Sigmoid colon (tissue), 7 donors: ENCODE measurements at regions of chr6 and their contacts with region 1.

Region 1: GRCh38 chr6:30678964-30679726 is 6.3 kb upstream of the DHX16 start:
- DNase-seq: peak; percentile 94
- H3K4me3 ChIP-seq: peak overlapping the region in 2 of 4 donors; percentile 63 to 79
- H3K27ac ChIP-seq: peak overlapping the region; percentile 94 to 99 (median 98)
- H3K4me1 ChIP-seq: peaks cover 0 to 58% (median 53%) of the 10 kb centered on the region in 4 donors
- H3K27me3 ChIP-seq: no peaks in the 10 kb centered on the region
- CTCF ChIP-seq: peak; percentile 92 to 98 (median 97)
- EP300 ChIP-seq: no peak
- POLR2A ChIP-seq: no peak

Region 2: GRCh38 chr6:30590509-30590908 is 88.6 kb before region 1 on chr6:
- intact Hi-C with region 1: no loop called
- DNase-seq: no peak
- H3K4me3 ChIP-seq: no peak overlapping the region
- H3K27ac ChIP-seq: peak overlapping the region in 3 of 4 donors; percentile 18 to 55 (median 23)
- H3K4me1 ChIP-seq: no peaks in the 10 kb centered on the region
- H3K27me3 ChIP-seq: no peaks in the 10 kb centered on the region
- CTCF ChIP-seq: no peak
- EP300 ChIP-seq: no peak
- POLR2A ChIP-seq: no peak

Region 3: GRCh38 chr6:30626484-30627366 is 52.4 kb before region 1 on chr6 and contains the start of gene ATAT1:
- intact Hi-C with region 1: no loop called
- DNase-seq: peak; percentile 96
- H3K4me3 ChIP-seq: peak within 1 kb of the TSS; percentile 18 to 64 (median 55)
- H3K27ac ChIP-seq: peak within 1 kb of the TSS; percentile 89 to 90 (median 90)
- H3K4me1 ChIP-seq: peaks cover 0 to 16% (median 15%) of the 10 kb centered on the region in 4 donors
- H3K27me3 ChIP-seq: no peaks in the 10 kb centered on the region
- CTCF ChIP-seq: peak in 2 of 4 experiments; percentile 15 to 41
- EP300 ChIP-seq: peak in 1 of 4 donors; percentile 48
- POLR2A ChIP-seq: peak; percentile 23 to 40
- total RNA-seq, gene ATAT1: 2.6 to 7.2 (median 4.8) TPM

Region 4: DNA sequence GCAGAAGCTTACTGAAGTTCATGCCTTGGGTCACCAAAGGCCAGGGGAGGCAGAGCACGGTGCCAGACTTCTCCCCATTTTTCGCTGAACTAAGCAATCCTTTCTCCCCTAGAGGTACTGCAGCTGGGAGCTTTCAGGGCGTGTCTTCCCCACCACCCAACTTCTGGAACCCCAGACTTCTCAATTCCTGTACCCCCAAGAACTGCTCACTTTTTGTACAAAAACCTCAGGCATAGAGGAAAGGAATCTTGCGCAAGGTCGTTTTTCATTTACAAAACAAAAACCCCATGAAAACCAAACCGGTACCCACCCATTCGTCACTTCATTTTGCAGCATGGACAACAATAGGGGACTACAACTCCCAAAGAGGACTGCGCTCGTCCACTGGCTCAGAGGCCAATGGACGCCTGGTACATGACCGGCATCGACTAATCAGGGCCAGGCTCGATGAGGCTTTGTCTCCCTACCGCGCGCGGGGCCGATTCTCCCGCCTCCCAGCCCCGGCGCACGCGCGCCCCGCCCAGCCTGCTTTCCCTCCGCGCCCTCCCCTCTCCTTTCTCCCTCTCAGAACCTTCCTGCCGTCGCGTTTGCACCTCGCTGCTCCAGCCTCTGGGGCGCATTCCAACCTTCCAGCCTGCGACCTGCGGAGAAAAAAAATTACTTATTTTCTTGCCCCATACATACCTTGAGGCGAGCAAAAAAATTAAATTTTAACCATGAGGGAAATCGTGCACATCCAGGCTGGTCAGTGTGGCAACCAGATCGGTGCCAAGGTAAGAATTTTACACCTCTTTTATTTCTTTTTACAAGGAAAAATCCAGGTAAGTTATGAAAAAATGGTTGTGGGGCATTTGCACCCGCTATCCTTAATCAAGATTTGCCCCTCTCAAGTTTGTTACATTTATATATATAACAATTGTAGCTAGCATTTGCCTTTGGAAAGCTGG is 40.9 kb after region 1 on chr6 and contains the start of gene TUBB:
- intact Hi-C with region 1: loop called (anchors 1 kb)
- DNase-seq: peak; percentile 99
- H3K4me3 ChIP-seq: peak within 1 kb of the TSS; percentile 70 to 80 (median 78)
- H3K27ac ChIP-seq: peak within 1 kb of the TSS; percentile 95 to 98 (median 96)
- H3K4me1 ChIP-seq: peaks cover 0 to 61% (median 46%) of the 10 kb centered on the region in 4 donors
- H3K27me3 ChIP-seq: no peaks in the 10 kb centered on the region
- CTCF ChIP-seq: peak in 2 of 4 experiments; percentile 35 to 39
- EP300 ChIP-seq: peak in 1 of 4 donors; percentile 17
- POLR2A ChIP-seq: peak; percentile 95 to 97
- total RNA-seq, gene TUBB: 245 to 287 (median 267) TPM

Region 5: DNA sequence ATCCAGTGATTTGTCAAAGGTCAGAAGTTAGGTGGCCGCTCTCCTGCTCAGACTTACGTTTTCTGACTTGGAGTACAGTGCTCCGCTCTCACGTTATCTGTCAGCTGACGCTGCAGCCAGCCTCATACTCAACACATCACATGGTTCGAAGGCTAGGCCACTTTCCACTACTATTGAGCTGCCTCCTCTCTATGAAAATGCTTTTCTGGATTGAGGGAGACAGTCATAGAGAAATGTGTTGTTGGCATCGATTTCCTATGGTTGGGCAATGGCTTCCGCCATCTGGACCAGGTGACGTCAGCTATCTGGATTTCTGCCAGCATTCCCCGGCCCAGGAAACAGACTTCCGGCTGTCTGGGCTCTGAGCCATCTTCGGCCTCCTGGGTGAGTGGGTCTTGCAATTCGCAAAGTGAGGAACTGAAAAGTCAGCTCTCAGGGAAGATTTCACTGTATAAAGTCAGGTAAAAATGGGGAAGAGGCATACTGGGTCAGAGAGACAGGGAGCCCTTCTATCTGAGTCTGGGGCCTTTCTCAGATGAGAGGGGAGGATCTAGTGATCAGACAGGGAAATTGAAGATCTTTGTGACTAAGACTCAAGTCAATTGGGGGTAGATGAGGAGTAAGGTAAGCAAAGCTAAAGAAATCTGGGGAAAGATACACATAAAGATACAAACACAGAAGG is 102.7 kb after region 1 on chr6:
- intact Hi-C with region 1: loop called (anchors 2 kb)
- DNase-seq: peak; percentile 99
- H3K4me3 ChIP-seq: no peak overlapping the region
- H3K27ac ChIP-seq: peak overlapping the region; percentile 85 to 90 (median 88)
- H3K4me1 ChIP-seq: peaks cover 2 to 54% (median 47%) of the 10 kb centered on the region in 4 donors
- H3K27me3 ChIP-seq: no peaks in the 10 kb centered on the region
- CTCF ChIP-seq: no peak
- EP300 ChIP-seq: peak; percentile 76 to 96 (median 86)
- POLR2A ChIP-seq: peak in 1 of 2 donors; percentile 19

Region 6: GRCh38 chr6:30877419-30878371 is 198.6 kb after region 1 on chr6:
- intact Hi-C with region 1: loop called (anchors 2 kb)
- DNase-seq: peak; percentile 95
- H3K4me3 ChIP-seq: peak overlapping the region in 3 of 4 donors; percentile 34 to 44 (median 42)
- H3K27ac ChIP-seq: peak overlapping the region; percentile 81 to 94 (median 88)
- H3K4me1 ChIP-seq: peaks cover 0 to 39% (median 26%) of the 10 kb centered on the region in 4 donors
- H3K27me3 ChIP-seq: no peaks in the 10 kb centered on the region
- CTCF ChIP-seq: peak; percentile 87 to 96 (median 92)
- EP300 ChIP-seq: no peak
- POLR2A ChIP-seq: no peak

Region 7: GRCh38 chr6:31110825-31111582 is 431.9 kb after region 1 on chr6:
- intact Hi-C with region 1: no loop called
- DNase-seq: no peak
- H3K4me3 ChIP-seq: no peak overlapping the region
- H3K27ac ChIP-seq: no peak overlapping the region
- H3K4me1 ChIP-seq: peaks cover 0 to 24% (median 22%) of the 10 kb centered on the region in 4 donors
- H3K27me3 ChIP-seq: no peaks in the 10 kb centered on the region
- CTCF ChIP-seq: no peak
- EP300 ChIP-seq: no peak
- POLR2A ChIP-seq: no peak